Activated naive CD4-positive, alpha-beta T cell treated with anti-CD3 and anti-CD28 coated beads for 36 hours (primary cell): ENCODE measurements at regions of chr4 and their contacts with region 1.

Region 1: DNA sequence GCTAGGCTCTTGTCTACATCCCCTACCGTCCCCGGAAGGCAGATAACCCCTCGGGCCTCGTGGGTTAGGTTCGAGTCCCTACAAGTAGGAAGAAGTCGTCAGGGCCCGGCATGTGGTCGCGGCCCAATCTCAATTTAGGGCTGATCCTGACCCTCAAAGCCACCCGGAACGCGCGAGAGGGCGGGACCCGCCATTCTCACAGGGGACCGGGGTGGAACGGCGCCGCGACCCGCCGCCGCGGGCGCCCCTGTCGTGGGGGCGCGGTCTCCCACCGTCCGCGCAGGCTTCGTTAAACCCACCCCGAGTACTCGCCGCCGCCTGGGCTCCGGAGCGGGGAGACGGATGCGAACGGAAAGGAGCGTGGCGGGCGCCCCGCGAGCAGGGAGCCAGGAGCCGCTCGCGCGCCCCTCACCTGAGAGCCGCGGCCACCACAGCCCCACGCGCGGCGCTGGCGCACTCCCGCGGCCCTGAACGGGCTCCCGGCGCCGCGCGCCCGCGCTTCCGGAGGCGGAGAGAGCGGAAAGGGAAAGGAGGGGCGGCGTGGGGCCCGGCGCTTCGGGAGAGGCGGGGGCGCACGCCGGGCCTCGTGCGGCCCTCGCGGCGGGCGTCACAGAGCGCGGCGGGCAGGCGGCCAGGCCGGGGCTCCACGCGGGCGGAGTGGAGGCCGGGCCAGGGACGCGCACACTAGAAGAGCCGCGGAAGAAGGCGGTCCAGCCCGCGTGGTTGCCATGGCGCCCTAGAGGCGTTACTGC is at the start of gene CFAP97:
- DNase-seq: peak; percentile 73
- H3K4me3 Mint-ChIP-seq: peak within 1 kb of the TSS; percentile 96
- H3K27ac Mint-ChIP-seq: peak within 1 kb of the TSS; percentile 96
- H3K4me1 Mint-ChIP-seq: peaks cover 32% of the 10 kb centered on the region
- H3K27me3 Mint-ChIP-seq: no peaks in the 10 kb centered on the region
- total RNA-seq, gene CFAP97: 38.4 to 43.6 TPM

Region 2: DNA sequence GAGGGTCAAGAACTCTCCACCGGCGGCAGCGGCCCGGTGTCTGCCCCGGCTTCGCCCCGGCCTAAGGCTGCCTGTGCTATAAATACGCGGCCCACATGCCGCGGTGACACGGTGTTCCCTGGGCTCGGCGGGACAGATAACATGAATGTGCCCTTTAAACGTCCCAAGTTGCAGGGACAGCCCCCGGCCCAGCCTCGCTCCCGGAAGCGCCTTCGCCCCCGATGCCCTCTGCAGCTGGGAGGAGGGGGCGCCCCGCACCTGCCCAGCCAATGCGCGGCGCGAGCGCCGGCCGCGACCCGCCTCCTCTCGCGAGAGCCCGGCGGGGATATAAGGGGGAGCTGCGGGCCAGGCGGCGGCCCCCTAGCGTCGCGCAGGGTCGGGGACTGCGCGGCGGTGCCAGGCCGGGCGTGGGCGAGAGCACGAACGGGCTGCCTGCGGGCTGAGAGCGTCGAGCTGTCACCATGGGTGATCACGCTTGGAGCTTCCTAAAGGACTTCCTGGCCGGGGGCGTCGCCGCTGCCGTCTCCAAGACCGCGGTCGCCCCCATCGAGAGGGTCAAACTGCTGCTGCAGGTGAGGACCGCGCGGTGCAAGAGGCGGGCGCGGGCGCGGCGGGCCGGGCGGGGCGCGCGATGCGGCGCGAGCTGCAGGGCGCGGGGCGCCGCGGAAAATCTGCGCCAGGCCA is 60.6 kb before region 1 on chr4 and contains the start of gene SLC25A4:
- CTCF ChIA-PET with region 1: no interaction called
- intact Hi-C with region 1: loop called (anchors 1 kb)
- DNase-seq: peak; percentile 87
- H3K4me3 Mint-ChIP-seq: peak within 1 kb of the TSS; percentile 83
- H3K27ac Mint-ChIP-seq: no peak within 1 kb of the TSS
- H3K4me1 Mint-ChIP-seq: peaks cover 13% of the 10 kb centered on the region
- H3K27me3 Mint-ChIP-seq: peaks cover 11% of the 10 kb centered on the region
- total RNA-seq, gene SLC25A4: 4.3 to 5.0 TPM

Region 3: GRCh38 chr4:185304944-185305690 is 101.5 kb after region 1 on chr4:
- CTCF ChIA-PET with region 1: interaction called, 4 read pairs
- intact Hi-C with region 1: loop called (anchors 1 kb)
- DNase-seq: peak; percentile 60
- H3K4me3 Mint-ChIP-seq: no peak overlapping the region
- H3K27ac Mint-ChIP-seq: no peak overlapping the region
- H3K4me1 Mint-ChIP-seq: no peaks in the 10 kb centered on the region
- H3K27me3 Mint-ChIP-seq: no peaks in the 10 kb centered on the region